Aorta (tissue), 5 donors: ENCODE measurements at regions of chr11 and their contacts with region 1.

Region 1: GRCh38 chr11:65477149-65477965 is 21.5 kb upstream of the MALAT1 start:
- DNase-seq: peak; percentile 99
- ATAC-seq: peak; percentile 92
- H3K4me3 ChIP-seq: peak overlapping the region; percentile 38 to 52
- H3K27ac ChIP-seq: peak overlapping the region; percentile 86 to 95
- H3K4me1 ChIP-seq: no peaks in the 10 kb centered on the region
- H3K27me3 ChIP-seq: no peaks in the 10 kb centered on the region

Region 2: GRCh38 chr11:65497141-65498041 is 20.0 kb after region 1 on chr11:
- intact Hi-C with region 1: loop called in 1 of 2 experiments (anchors 1 kb)
- DNase-seq: peak; percentile 99 to 100
- ATAC-seq: peak; percentile 93
- H3K4me3 ChIP-seq: peak overlapping the region; percentile 60 to 75
- H3K27ac ChIP-seq: peak overlapping the region; percentile 100
- H3K4me1 ChIP-seq: peaks cover 0 to 1% of the 10 kb centered on the region in 2 donors
- H3K27me3 ChIP-seq: peaks cover 0 to 2% of the 10 kb centered on the region in 2 donors